A549 (cell line): ENCODE measurements at regions of chr15 and their contacts with region 1.

Region 1: GRCh38 chr15:65856821-65857455 is 12.4 kb upstream of the RAB11A start:
- DNase-seq: peak; percentile 57 to 77
- ATAC-seq: peak; percentile 89 to 90
- H3K4me3 ChIP-seq: no peak overlapping the region
- H3K27ac ChIP-seq: no peak overlapping the region
- H3K4me1 ChIP-seq: no peaks in the 10 kb centered on the region
- CTCF ChIP-seq: peak; percentile 92
- EP300 ChIP-seq: no peak
- POLR2A ChIP-seq: no peak
- RAD21 ChIP-seq: peak; percentile 55 to 56; a peak in 4 of 5 replicates

Region 2: GRCh38 chr15:65757256-65757655 is 99.7 kb before region 1 on chr15:
- CTCF ChIA-PET with region 1: no interaction called
- POLR2A ChIA-PET with region 1: no interaction called
- DNase-seq: no peak
- ATAC-seq: no peak
- H3K4me3 ChIP-seq: no peak overlapping the region
- H3K27ac ChIP-seq: no peak overlapping the region
- H3K4me1 ChIP-seq: no peaks in the 10 kb centered on the region
- CTCF ChIP-seq: no peak
- EP300 ChIP-seq: no peak
- POLR2A ChIP-seq: no peak
- RAD21 ChIP-seq: no peak

Region 3: DNA sequence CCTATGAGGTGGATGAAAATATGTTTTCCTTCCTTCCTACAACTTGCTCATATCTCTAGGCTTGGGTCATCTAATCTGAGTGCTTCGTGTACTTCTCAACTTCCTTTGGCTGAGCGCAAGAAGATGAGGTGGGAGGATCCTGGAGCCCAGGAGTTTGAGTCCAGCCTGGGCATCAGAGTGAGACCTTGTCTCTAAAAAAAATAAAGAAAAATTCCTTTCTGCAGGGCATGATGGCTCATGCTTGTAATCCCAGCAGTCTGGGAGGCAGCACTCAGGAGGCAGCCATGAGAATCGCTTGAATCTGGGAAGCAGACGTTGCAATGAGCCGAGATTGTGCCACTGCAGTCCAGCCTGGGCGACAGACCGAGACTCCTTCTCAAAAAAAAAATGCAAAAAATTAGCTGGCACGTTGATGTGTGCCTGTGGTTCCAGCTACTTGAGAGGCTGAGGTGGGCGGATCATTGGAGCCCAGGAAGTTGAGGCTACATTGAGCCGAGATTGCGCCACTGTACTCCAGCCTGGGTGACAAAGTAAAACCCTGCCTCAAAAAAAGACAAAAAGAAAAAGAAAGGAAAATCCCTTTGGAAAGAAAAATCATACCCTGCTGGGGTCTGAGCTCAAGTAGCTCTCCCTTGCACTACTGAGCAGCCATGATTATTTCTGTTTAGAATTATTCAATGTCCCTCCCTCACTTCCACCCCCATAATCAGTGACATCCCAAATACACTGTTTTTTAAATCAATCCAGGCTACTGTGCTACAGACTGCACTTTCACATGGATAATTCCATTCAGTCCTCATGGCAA is 15.6 kb before region 1 on chr15:
- CTCF ChIA-PET with region 1: interaction called, 64 read pairs
- POLR2A ChIA-PET with region 1: no interaction called
- DNase-seq: no peak
- ATAC-seq: peak; percentile 45 to 47; a peak in 4 of 6 replicates
- H3K4me3 ChIP-seq: no peak overlapping the region
- H3K27ac ChIP-seq: 0 out of 6 replicates have a peak overlapping the region, but pooled peaks of 1 of the 2 experiments have one; percentile 10
- H3K4me1 ChIP-seq: peaks cover 13% of the 10 kb centered on the region
- CTCF ChIP-seq: no peak
- EP300 ChIP-seq: no peak
- POLR2A ChIP-seq: no peak
- RAD21 ChIP-seq: no peak

Region 4: GRCh38 chr15:65906396-65906795 is 49.5 kb after region 1 on chr15:
- CTCF ChIA-PET with region 1: no interaction called
- POLR2A ChIA-PET with region 1: no interaction called
- DNase-seq: no peak
- ATAC-seq: no peak
- H3K4me3 ChIP-seq: no peak overlapping the region
- H3K27ac ChIP-seq: no peak overlapping the region
- H3K4me1 ChIP-seq: peaks cover 30% of the 10 kb centered on the region
- CTCF ChIP-seq: no peak
- EP300 ChIP-seq: no peak
- POLR2A ChIP-seq: no peak
- RAD21 ChIP-seq: no peak